ENCODE measurements at regions of chr17 and their contacts with region 1.

Region 1: GRCh38 chr17:47253541-47254402 is at the start of gene ITGB3:
- DNase-seq: peak; percentile 78 to 83
- ATAC-seq: peak; percentile 98 to 99
- H3K4me3 ChIP-seq: peak within 1 kb of the TSS; percentile 56
- H3K27ac ChIP-seq: peak within 1 kb of the TSS; percentile 42 to 82; a peak in 5 of 6 replicates
- H3K4me1 ChIP-seq: peaks cover 13% of the 10 kb centered on the region; the same call in 2 of the 3 replicates
- CTCF ChIP-seq: peak; percentile 63
- EP300 ChIP-seq: no peak
- POLR2A ChIP-seq: no peak
- RAD21 ChIP-seq: peak in 1 of 2 experiments; percentile 40; a peak in 3 of 5 replicates
- polyA plus RNA-seq, gene ITGB3: 0.34 and 0.90 TPM in 2 replicates

Region 2: GRCh38 chr17:47197821-47198220 is 56.0 kb before region 1 on chr17:
- CTCF ChIA-PET with region 1: no interaction called
- POLR2A ChIA-PET with region 1: no interaction called
- DNase-seq: no peak
- ATAC-seq: no peak
- H3K4me3 ChIP-seq: no peak overlapping the region
- H3K27ac ChIP-seq: no peak overlapping the region
- H3K4me1 ChIP-seq: no peaks in the 10 kb centered on the region
- CTCF ChIP-seq: no peak
- EP300 ChIP-seq: no peak
- POLR2A ChIP-seq: no peak
- RAD21 ChIP-seq: no peak

Region 3: DNA sequence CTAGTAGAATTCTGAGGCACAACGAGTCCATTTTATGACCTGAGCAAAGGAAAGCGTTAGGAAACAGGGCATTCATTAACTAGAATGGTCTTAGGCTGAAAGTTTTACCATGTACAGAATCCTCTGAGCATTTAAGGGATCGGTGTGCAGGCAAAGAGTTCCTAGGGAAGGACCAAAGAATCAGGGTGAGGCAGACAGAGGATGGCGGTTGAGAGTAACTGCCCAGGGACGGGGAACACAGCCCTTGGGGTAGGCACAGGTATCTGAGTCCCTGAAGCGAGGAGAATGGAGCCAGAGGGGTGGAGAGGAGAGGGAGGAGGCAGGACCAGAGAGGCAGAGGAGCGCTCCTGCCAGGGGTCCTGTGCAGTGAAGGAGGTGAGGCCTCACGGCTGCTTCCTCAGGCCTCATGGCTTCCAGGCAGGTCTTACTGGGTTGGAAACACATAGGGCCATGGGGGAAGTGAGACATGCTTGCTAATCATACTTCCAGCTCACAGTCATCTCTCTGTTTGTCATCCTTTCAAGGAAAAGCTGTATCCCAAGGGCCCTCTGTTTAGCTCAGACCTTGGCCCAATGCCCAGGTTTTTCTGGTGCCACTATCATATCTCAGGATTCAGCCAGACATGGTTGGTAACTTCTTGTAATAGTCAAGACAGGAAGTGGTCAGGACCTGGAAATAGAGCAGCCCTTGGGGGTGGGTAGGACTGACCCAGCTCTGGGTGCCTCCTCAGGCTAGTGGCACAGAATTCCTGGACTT is 14.0 kb before region 1 on chr17:
- CTCF ChIA-PET with region 1: interaction called, 34 read pairs
- POLR2A ChIA-PET with region 1: no interaction called
- DNase-seq: peak; percentile 50 to 75
- ATAC-seq: peak; percentile 69 to 84
- H3K4me3 ChIP-seq: no peak overlapping the region
- H3K27ac ChIP-seq: peak overlapping the region; percentile 53 to 81
- H3K4me1 ChIP-seq: peaks cover 13% of the 10 kb centered on the region
- CTCF ChIP-seq: no peak
- EP300 ChIP-seq: no peak
- POLR2A ChIP-seq: no peak
- RAD21 ChIP-seq: no peak

Region 4: GRCh38 chr17:47265983-47266541 is 12.3 kb after region 1 on chr17:
- CTCF ChIA-PET with region 1: interaction called, 13 read pairs
- POLR2A ChIA-PET with region 1: no interaction called
- DNase-seq: peak in 1 of 2 experiments; percentile 30
- ATAC-seq: peak; percentile 42 to 70; a peak in 3 of 6 replicates
- H3K4me3 ChIP-seq: no peak overlapping the region
- H3K27ac ChIP-seq: peak overlapping the region; percentile 23 to 46; a peak in 3 of 6 replicates
- H3K4me1 ChIP-seq: peaks cover 20% of the 10 kb centered on the region
- CTCF ChIP-seq: no peak
- EP300 ChIP-seq: no peak
- POLR2A ChIP-seq: no peak
- RAD21 ChIP-seq: no peak